ENCODE measurements at regions of chr3 and their contacts with region 1.

Region 1: DNA sequence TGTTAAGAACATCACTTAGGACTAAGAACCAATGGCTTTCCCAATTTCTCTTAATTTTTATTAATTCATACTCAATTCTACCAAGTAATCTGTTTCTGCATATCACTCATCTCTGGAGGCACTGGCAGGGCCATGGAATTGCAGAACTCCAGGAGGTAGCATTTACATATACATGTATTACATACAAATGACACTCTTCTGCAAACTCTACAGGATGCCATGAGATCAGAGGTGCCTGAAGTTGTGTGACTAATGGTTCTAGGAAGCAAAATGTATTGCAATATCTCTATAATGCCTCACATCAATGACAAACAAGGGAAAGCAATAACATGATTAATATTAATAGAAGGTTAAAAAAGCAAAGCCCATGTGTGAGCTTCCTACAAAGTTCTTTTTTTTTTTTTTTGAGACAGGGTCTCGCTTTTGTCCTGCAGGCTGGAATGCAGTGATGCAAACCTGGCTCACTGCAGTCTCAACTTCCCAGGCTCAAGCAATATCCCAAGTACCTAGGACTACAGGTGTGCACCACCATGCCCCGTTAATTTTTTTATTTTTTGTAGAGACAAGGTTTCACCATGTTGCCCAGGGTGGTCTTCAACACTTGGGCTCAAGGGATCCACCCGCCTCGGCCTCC is 33.0 kb downstream of the DENND6A start:
- DNase-seq: no peak
- ATAC-seq: no peak
- H3K4me3 ChIP-seq: no peak overlapping the region
- H3K4me3 Mint-ChIP-seq: no peak overlapping the region
- H3K27ac ChIP-seq: no peak overlapping the region
- H3K27ac Mint-ChIP-seq: peak overlapping the region in 2 of 9 donors; percentile 28 to 54
- H3K4me1 ChIP-seq: no peaks in the 10 kb centered on the region
- H3K4me1 Mint-ChIP-seq: peaks cover 0 to 15% (median 4%) of the 10 kb centered on the region in 7 donors
- H3K27me3 ChIP-seq: no peaks in the 10 kb centered on the region
- H3K27me3 Mint-ChIP-seq: no peaks in the 10 kb centered on the region

Region 2: GRCh38 chr3:57646723-57647122 is 13.2 kb before region 1 on chr3:
- CTCF ChIA-PET with region 1: no interaction called
- POLR2A ChIA-PET with region 1: no interaction called
- intact Hi-C with region 1: loop called in 1 of 2 experiments (anchors 2 kb)
- DNase-seq: peak in 5 of 9 donors; percentile 8 to 20 (median 12)
- ATAC-seq: no peak
- H3K4me3 ChIP-seq: no peak overlapping the region
- H3K4me3 Mint-ChIP-seq: no peak overlapping the region
- H3K27ac ChIP-seq: no peak overlapping the region
- H3K27ac Mint-ChIP-seq: peak overlapping the region in 8 of 9 donors; percentile 43 to 81 (median 66)
- H3K4me1 ChIP-seq: no peaks in the 10 kb centered on the region
- H3K4me1 Mint-ChIP-seq: peaks cover 6 to 27% (median 22%) of the 10 kb centered on the region in 7 donors
- H3K27me3 ChIP-seq: no peaks in the 10 kb centered on the region
- H3K27me3 Mint-ChIP-seq: no peaks in the 10 kb centered on the region

Region 3: DNA sequence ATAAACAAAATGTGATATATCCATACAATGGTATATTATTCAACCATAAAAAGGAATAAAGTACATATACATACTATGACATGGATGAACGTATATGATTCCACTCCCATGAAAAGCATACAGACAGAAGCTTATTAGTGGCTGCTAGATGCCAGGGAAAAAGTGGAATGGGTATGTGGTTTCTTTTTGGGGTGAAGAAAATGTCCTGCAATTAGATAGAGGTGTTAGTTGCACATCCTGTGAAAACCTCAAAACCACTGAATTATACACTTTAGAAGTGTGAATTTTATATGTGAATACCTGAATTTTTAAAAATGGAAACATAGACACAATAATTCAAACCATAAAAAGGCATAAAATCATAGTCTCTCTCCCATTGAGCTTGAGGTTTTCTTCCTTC is 21.8 kb after region 1 on chr3:
- CTCF ChIA-PET with region 1: no interaction called
- POLR2A ChIA-PET with region 1: no interaction called
- intact Hi-C with region 1: loop called in 1 of 2 experiments (anchors 2 kb)
- DNase-seq: no peak
- ATAC-seq: no peak
- H3K4me3 ChIP-seq: no peak overlapping the region
- H3K4me3 Mint-ChIP-seq: peak overlapping the region in 3 of 10 donors; percentile 37 to 70 (median 62)
- H3K27ac ChIP-seq: no peak overlapping the region
- H3K27ac Mint-ChIP-seq: peak overlapping the region in 1 of 9 donors; percentile 42
- H3K4me1 ChIP-seq: peaks cover 21 to 24% of the 10 kb centered on the region in 2 donors
- H3K4me1 Mint-ChIP-seq: peaks cover 39 to 82% (median 75%) of the 10 kb centered on the region in 7 donors
- H3K27me3 ChIP-seq: no peaks in the 10 kb centered on the region
- H3K27me3 Mint-ChIP-seq: no peaks in the 10 kb centered on the region